ENCODE measurements at regions of chr12 and their contacts with region 1.

Region 1: DNA sequence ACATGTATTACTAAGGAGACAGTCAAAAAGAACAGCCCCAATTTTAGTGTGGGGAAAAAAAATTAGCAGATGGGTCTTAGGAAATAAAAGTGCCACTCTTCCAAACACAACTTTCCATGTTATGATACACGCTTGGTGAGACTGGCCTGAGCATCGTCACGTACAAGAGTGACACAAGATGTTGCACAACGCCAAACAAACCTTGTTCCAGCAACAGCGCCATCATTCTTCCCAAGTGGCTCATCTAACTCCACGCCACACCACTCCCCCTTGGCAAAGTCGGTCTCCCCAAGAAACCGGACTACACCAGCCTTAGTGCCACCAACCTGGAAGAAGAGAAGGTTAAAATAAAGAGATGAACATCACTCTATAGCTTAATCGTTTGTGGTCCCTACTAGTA is 58.7 kb downstream of the CLIP1 start:
- DNase-seq: no peak
- ATAC-seq: no peak
- H3K4me3 ChIP-seq: no peak overlapping the region
- H3K4me3 Mint-ChIP-seq: no peak overlapping the region
- H3K27ac ChIP-seq: no peak overlapping the region
- H3K27ac Mint-ChIP-seq: no peak overlapping the region
- H3K4me1 ChIP-seq: no peaks in the 10 kb centered on the region
- H3K4me1 Mint-ChIP-seq: peaks cover 5% of the 10 kb centered on the region
- H3K27me3 ChIP-seq: no peaks in the 10 kb centered on the region
- H3K27me3 Mint-ChIP-seq: no peaks in the 10 kb centered on the region
- CTCF ChIP-seq: no peak

Region 2: GRCh38 chr12:122107261-122107660 is 256.5 kb before region 1 on chr12:
- CTCF ChIA-PET with region 1: no interaction called
- POLR2A ChIA-PET with region 1: no interaction called
- intact Hi-C with region 1: no loop called
- DNase-seq: no peak
- ATAC-seq: no peak
- H3K4me3 ChIP-seq: no peak overlapping the region
- H3K4me3 Mint-ChIP-seq: no peak overlapping the region
- H3K27ac ChIP-seq: no peak overlapping the region
- H3K27ac Mint-ChIP-seq: no peak overlapping the region
- H3K4me1 ChIP-seq: peaks cover 55% of the 10 kb centered on the region
- H3K4me1 Mint-ChIP-seq: peaks cover 74% of the 10 kb centered on the region
- H3K27me3 ChIP-seq: no peaks in the 10 kb centered on the region
- H3K27me3 Mint-ChIP-seq: no peaks in the 10 kb centered on the region
- CTCF ChIP-seq: no peak

Region 3: DNA sequence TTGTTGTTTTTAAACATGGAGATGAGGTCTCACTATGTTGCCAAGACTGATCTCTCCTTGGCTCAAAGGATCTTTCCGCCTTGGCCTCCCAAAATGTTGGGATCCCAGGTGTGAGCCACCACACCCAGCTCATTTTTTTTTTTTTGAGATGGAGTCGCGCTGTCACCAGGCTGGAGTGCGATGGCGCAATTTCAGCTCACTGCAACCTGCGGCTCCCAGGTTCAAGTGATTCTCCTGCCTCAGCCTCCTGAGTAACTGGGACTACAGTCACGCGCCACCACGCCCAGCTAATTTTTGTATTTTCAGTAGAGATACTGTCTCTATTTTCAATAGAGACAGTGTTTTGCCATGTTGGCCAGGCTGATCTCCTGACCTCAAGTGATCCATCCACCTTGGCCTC is 63.6 kb after region 1 on chr12:
- CTCF ChIA-PET with region 1: no interaction called
- POLR2A ChIA-PET with region 1: no interaction called
- intact Hi-C with region 1: loop called in 1 of 2 experiments (anchors 2 kb)
- DNase-seq: no peak
- ATAC-seq: no peak
- H3K4me3 ChIP-seq: no peak overlapping the region
- H3K4me3 Mint-ChIP-seq: no peak overlapping the region
- H3K27ac ChIP-seq: no peak overlapping the region
- H3K27ac Mint-ChIP-seq: no peak overlapping the region
- H3K4me1 ChIP-seq: peaks cover 12% of the 10 kb centered on the region
- H3K4me1 Mint-ChIP-seq: peaks cover 13% of the 10 kb centered on the region
- H3K27me3 ChIP-seq: no peaks in the 10 kb centered on the region
- H3K27me3 Mint-ChIP-seq: no peaks in the 10 kb centered on the region
- CTCF ChIP-seq: no peak